Heart right ventricle (tissue), 16 donors: ENCODE measurements at regions of chr22 and their contacts with region 1.

Region 1: DNA sequence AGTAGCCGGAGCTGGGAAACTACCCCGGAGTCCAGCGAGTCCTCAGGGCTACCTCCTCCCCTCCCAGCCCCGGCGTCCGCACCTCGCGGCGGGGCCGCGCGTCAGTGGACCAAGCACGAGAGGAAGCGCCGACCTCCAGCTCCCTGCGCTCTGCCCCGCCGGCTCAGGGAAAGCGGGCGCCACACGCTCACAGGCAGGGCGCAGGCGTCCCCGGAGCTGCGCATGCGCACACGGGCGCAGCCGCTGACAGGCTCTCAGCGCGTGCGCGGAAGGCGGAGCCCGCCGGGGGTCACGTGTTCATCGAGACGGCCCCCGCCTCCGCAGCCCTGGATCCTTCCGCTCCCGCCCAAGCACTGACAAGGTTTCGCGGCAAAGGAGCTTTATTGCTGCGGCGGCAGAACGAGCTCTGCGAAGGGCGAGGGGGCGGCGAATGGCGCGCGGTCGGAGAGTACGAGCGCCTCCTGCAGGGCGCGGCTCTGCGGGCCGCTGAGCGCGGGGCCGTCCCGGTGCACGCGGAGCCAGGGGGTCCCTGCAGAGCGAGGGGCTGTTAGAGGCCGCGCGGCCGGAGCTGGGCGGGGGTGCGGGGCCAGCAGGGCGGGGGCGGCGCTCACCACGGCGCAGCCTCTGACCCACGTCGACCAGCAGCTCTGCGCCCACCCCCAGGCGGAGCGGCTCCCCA is at the start of gene SCO2:
- DNase-seq: peak; percentile 96 to 98
- ATAC-seq: peak; percentile 64 to 84 (median 76)
- H3K4me3 ChIP-seq: peak within 1 kb of the TSS; percentile 50 to 86 (median 78)
- H3K27ac ChIP-seq: peak within 1 kb of the TSS; percentile 69 to 99 (median 94)
- H3K4me1 ChIP-seq: peaks cover 11 to 56% (median 40%) of the 10 kb centered on the region in 9 donors
- H3K27me3 ChIP-seq: peaks cover 0 to 9% (median 2%) of the 10 kb centered on the region in 7 donors
- CTCF ChIP-seq: peak in 8 of 9 donors; percentile 12 to 59 (median 39)
- total RNA-seq, gene SCO2: 0.57 to 2.8 (median 0.92) TPM in 4 of 10 donors, not detected in the others

Region 2: DNA sequence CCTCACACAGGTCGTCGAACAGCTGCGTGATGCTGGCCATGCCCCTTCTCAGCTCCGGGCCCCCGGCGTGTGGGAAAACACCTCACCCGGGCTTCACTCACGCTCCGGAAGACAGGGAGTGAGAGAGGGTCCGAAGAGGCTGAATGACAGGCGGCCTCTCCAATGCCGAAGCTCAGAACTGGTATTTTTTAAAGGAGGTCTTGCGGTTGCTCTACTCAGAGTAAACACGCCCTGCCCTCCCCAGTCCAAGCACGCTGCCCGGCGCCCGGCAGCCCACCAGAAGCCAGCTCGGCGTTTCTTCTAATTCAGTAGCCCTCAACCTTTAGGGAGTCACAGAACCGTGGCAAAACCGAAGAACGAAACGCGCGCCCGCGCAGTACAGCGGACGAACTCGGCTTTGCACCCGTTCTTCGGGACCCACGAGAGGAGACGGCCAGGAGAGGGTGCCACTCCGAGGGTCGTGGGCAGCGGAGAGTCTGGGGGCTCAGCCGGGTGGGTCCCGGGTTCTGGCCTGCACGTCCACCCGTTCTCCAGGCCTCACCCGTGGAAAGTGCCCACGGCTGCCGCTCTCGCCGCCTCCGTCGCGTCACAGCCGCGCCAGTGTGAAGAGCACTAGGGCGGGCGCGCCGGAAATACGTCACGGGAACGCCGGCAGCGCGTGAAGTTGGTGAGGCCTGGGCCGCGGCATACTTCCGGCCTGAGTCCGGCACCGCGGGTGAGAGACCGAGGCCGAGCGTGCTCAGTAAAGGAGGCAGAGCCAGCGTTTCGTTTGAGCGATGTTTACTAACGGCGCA is 280.9 kb before region 1 on chr22 and contains the start of gene TUBGCP6:
- intact Hi-C with region 1: loop called in 1 of 10 experiments (anchors 10 kb)
- DNase-seq: peak; percentile 95
- ATAC-seq: peak; percentile 90 to 96 (median 94)
- H3K4me3 ChIP-seq: peak within 1 kb of the TSS; percentile 68 to 100 (median 77)
- H3K27ac ChIP-seq: peak within 1 kb of the TSS; percentile 28 to 96 (median 86)
- H3K4me1 ChIP-seq: peaks cover 34 to 65% (median 51%) of the 10 kb centered on the region in 9 donors
- H3K27me3 ChIP-seq: no peaks in the 10 kb centered on the region
- CTCF ChIP-seq: peak in 3 of 9 donors; percentile 40 to 41 (median 40)
- total RNA-seq, gene TUBGCP6: 15.5 to 23.3 (median 18.5) TPM

Region 3: DNA sequence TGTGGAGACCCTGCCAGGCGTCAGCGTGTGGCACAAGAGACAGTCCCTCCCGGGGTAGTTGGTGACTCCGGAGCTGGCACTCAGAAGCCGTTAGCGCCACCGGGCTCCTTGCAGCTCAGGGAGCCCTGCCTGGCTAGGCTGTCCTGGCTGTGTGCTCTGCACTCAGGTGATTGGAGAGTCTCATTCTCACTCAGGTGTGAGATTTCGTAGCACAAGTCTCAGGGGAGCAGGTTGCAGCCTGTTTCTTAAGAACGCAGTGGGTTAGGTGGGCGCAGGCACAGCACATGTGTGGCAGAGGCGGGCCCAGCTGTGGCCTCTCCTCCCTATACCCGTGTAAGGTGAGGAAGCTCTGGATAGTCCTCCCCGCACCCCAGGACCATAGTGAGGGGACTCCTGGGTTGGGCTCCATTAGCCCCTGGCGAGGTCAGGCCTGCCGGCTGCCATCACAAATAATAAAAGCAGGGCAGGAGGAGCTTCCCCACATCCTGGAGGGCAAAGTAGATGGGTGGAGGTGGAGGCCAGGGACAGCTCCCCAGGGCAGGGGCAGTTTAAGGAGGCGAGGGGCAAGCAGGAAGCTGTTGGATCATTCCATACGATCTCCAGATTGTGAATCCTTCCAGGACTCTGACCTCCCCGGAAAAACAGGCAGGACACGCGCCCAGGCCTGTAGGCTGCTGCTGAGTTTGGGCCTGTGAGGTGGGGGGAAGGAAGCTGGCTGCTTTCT is 90.1 kb before region 1 on chr22:
- intact Hi-C with region 1: no loop called
- DNase-seq: no peak
- ATAC-seq: no peak
- H3K4me3 ChIP-seq: no peak overlapping the region
- H3K27ac ChIP-seq: no peak overlapping the region
- H3K4me1 ChIP-seq: no peaks in the 10 kb centered on the region
- H3K27me3 ChIP-seq: no peaks in the 10 kb centered on the region
- CTCF ChIP-seq: no peak

Region 4: DNA sequence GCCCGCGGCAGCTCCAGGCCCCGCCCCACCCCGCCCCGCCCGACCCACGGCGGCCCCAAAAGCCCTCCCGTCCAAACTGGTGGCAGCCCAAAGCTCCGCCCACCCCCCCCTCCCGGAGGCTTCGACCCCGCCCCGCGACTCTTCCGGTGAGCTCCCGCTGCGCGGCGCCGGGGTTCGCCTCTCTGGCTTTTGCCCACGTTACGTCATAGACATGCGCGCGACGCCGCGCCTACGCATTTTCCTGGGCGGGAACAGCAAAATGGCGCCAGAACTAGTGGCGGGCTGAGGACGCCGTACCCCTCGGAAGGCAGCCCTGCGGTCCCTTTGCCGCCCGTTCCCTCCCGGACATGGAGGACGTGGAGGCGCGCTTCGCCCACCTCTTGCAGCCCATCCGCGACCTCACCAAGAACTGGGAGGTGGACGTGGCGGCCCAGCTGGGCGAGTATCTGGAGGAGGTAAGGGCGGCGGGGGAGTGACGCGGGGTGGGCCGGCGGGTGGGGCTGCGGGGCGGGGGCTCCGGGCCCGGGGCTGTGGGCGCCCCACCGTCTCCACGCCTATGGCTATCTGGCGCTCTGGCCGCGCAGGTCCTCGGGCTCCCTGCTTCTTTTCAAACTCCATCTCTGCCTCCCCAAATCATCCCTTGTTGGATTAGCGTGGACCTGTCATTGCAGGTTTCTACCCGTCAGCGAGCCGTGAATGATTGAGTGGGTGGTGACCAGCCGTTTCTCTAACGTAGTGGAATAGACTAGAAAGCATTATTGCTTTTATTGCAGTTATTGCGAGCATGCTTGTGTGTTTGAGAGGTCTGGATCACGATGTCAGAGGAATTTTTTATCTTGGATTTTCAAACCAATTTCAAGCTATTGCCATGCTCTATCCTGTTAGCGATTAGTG is 17.3 kb before region 1 on chr22 and contains the start of gene NCAPH2:
- intact Hi-C with region 1: loop called in 5 of 10 experiments (anchors 1 to 2 kb)
- DNase-seq: peak; percentile 95 to 97
- ATAC-seq: peak; percentile 74 to 88 (median 84)
- H3K4me3 ChIP-seq: peak within 1 kb of the TSS; percentile 75 to 100 (median 94)
- H3K27ac ChIP-seq: peak within 1 kb of the TSS; percentile 64 to 97 (median 94)
- H3K4me1 ChIP-seq: peaks cover 13 to 33% (median 27%) of the 10 kb centered on the region in 9 donors
- H3K27me3 ChIP-seq: no peaks in the 10 kb centered on the region
- CTCF ChIP-seq: peak in 1 of 9 donors; percentile 10
- total RNA-seq, gene NCAPH2: 21.7 to 31.9 (median 26.2) TPM

Region 5: DNA sequence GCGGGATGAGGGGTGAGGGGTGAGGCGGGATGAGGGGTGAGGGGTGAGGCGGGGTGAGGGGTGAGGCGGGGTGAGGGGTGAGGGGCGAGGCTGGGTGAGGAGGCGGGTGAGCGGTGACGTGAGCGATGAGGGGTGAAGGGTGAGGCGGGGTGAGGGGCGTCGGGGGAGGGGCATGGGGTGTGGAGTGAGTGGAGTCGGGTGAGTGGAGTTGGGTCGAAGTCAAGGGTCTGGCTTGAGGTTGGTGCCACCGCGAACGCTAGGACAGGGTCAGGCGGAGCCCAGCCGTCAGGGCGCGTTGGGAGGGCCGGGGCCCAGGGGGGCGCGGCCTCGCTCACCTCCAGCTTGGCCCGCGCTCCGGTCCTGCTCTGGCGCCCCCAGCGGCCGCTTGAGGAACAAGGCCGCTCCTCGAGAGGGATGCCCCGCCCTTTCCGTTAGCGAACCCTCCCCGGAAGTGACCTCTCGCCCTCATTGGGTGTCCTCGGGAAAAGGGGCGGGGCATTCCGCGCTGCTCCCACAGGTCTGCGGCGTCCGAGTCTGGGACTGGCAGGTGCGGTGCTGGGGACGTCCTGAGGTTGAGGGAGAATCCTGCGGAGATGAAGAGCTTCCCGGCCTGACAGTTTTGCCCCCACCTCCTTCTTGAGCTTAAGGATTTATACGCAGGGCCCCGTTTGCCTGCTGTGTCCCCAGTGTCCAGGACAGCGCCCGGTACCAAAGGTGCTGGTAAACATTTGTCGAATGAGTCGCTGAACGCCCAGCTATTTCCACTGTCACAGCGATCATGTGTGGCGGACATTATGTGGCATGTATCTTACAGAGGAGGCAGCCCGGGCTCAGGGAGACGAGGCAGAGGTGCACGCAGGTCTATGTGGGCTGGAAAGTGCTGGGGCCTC is 37.2 kb after region 1 on chr22 and contains the start of gene SYCE3:
- intact Hi-C with region 1: loop called in 1 of 10 experiments (anchors 5 kb)
- DNase-seq: peak; percentile 97
- ATAC-seq: peak; percentile 94 to 98 (median 96)
- H3K4me3 ChIP-seq: peak within 1 kb of the TSS; percentile 44 to 87 (median 65)
- H3K27ac ChIP-seq: peak within 1 kb of the TSS; percentile 47 to 91 (median 86)
- H3K4me1 ChIP-seq: peaks cover 0 to 20% (median 7%) of the 10 kb centered on the region in 9 donors
- H3K27me3 ChIP-seq: no peaks in the 10 kb centered on the region
- CTCF ChIP-seq: peak; percentile 88 to 99 (median 98)
- total RNA-seq, gene SYCE3: 0.74 to 0.90 TPM in 2 of 10 donors, not detected in the others

Region 6: DNA sequence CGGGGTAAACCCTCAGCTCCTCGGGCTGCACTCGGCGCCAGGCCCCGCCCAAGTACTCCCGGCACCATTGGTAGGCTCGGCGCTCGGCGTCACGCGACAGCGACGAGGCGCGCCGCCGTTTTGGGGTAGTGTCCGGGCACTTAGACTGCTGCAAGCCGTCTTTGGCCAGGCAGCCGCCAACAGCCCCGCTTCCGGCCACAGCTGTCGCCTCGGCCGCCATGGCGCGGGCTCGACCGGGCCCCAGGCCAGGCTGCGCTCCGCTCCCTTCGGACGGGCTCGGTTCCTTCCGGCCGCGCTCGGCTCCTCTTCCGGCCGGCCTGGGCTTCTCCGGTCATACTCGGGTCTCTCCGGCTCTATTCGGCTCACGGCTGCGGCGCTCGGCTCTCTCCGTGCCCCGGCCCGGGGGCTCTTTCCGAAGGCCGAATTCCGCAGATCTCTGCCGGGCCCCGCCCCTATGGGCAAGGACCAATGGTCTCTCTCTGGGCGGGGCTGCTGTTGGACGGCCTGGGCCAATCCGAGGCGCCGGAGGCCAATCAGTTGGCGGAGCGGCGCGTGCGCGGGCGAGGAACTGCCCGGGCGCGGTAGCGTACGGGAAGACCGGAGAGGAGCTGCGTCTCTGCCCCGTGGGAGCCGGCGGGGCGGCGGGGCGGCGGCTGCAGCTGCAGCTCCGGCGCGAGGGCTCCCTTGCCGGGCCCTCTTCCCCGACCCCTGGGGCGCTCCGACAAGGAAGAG is 57.2 kb after region 1 on chr22 and contains the start of gene CHKB:
- intact Hi-C with region 1: loop called in 1 of 10 experiments (anchors 5 kb)
- DNase-seq: peak; percentile 99
- ATAC-seq: peak; percentile 94 to 98 (median 97)
- H3K4me3 ChIP-seq: peak within 1 kb of the TSS; percentile 58 to 88 (median 78)
- H3K27ac ChIP-seq: peak within 1 kb of the TSS; percentile 96 to 100 (median 97)
- H3K4me1 ChIP-seq: peaks cover 5 to 48% (median 37%) of the 10 kb centered on the region in 9 donors
- H3K27me3 ChIP-seq: no peaks in the 10 kb centered on the region
- CTCF ChIP-seq: peak in 1 of 9 donors; percentile 43
- total RNA-seq, gene CHKB: 31.7 to 60.1 (median 39.9) TPM

Region 7: DNA sequence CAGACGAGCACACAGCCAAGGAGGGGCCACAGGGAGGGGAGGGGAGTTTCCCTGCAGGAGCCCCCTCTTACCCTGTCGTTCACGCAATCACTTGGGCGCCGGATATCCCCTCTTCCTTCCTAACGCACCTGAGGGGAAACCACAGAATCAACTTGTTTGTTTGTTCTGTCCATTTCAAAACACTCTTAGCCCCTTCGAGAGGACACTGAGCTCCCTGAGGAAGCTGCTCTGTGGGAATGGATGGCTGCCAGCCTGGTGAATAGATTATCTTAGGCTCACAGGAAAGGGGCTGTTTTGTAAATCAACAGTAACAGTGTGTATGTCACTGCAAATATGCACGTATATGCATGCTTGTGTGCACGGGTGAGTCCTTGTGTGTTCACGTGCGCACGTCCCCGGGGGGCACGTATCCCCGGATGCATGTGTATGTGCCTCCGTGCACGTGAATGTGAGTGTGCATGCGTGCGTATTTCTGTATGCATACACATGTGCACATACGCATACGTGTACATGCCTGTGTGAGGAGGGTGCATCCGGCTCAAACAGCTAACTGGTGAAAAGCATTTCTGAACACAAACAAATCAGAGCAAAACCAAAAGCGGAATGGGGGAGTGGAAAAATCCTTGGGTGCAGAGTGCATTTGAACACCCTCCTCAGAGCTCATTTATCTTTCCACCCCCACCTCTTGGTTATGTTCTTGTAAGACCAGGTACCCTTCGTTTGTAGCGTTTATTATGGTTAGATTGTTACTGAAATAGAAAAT is 95.2 kb after region 1 on chr22:
- intact Hi-C with region 1: loop called in 4 of 10 experiments (anchors 5 kb)
- DNase-seq: peak; percentile 80 to 88
- ATAC-seq: peak; percentile 74 to 93 (median 86)
- H3K4me3 ChIP-seq: peak overlapping the region in 8 of 10 donors; percentile 23 to 52 (median 39)
- H3K27ac ChIP-seq: peak overlapping the region in 8 of 10 donors; percentile 23 to 84 (median 66)
- H3K4me1 ChIP-seq: peaks cover 2 to 37% (median 31%) of the 10 kb centered on the region in 9 donors
- H3K27me3 ChIP-seq: peaks cover 0 to 8% (median 0%) of the 10 kb centered on the region in 7 donors
- CTCF ChIP-seq: peak in 3 of 9 donors; percentile 2 to 85 (median 14)

Region 8: GRCh38 chr22:50641696-50642607 is 116.4 kb after region 1 on chr22:
- intact Hi-C with region 1: no loop called
- DNase-seq: peak; percentile 41
- ATAC-seq: peak; percentile 75 to 89 (median 83)
- H3K4me3 ChIP-seq: peak overlapping the region in 2 of 10 donors; percentile 13 to 18
- H3K27ac ChIP-seq: peak overlapping the region; percentile 40 to 94 (median 64)
- H3K4me1 ChIP-seq: peaks cover 11 to 25% (median 16%) of the 10 kb centered on the region in 9 donors
- H3K27me3 ChIP-seq: peaks cover 0 to 40% (median 23%) of the 10 kb centered on the region in 7 donors
- CTCF ChIP-seq: peak in 8 of 9 donors; percentile 20 to 68 (median 46)